ENCODE measurements at regions of chr13 and their contacts with region 1.

Region 1: DNA sequence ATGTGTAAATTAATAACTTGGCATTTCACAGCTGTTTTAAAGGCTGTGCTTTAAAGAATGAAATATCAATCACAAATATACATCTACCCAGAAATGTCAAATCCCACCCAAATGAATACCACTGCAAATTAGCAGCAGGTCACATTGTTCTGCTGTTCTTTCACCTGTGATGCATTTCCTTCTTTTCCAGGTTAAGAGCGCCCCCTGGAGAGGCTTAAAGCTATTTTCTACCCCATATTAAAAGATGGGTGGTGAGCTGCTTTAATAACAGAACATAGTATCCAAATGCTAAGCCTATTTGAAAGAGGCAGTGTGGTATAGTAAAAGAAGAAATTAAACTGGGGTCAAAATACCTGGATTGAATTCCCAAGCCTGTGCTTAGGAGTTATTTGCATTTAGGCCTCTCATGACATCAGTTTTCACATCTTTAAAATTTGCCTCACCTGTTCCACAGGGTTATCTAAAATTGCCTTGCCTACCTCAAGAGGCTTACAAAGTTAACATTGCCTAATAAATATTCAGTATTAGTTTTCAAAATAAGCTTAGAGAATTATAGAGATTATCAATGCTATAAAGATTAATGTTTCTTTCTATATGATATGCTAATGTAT is 396.9 kb upstream of the SLITRK5 start:
- DNase-seq: peak; percentile 10
- H3K4me3 ChIP-seq: no peak overlapping the region
- H3K27ac ChIP-seq: no peak overlapping the region
- H3K27me3 ChIP-seq: no peaks in the 10 kb centered on the region
- CTCF ChIP-seq: peak; percentile 76

Region 2: DNA sequence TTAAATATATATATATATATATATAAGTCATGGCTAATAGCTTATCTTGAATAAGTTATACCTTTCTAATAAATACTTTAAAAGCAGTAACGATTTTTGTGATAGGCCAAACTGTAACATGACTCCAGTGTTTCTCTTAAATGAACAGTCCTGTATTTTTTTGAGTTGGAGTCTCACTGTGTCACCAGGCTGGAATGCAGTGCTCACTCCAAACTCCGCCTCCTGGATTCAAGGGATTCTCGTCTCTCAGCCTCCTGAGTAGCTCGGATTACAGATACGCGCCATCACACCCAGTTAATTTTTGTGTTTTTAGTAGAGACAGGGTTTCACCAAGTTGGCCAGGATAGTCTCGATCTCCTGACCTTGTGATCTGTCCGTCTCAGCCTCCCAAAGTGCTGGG is 417.3 kb before region 1 on chr13:
- CTCF ChIA-PET with region 1: interaction called, 25 read pairs
- POLR2A ChIA-PET with region 1: no interaction called
- DNase-seq: peak; percentile 13
- H3K4me3 ChIP-seq: no peak overlapping the region
- H3K27ac ChIP-seq: no peak overlapping the region
- H3K27me3 ChIP-seq: no peaks in the 10 kb centered on the region
- CTCF ChIP-seq: no peak

Region 3: DNA sequence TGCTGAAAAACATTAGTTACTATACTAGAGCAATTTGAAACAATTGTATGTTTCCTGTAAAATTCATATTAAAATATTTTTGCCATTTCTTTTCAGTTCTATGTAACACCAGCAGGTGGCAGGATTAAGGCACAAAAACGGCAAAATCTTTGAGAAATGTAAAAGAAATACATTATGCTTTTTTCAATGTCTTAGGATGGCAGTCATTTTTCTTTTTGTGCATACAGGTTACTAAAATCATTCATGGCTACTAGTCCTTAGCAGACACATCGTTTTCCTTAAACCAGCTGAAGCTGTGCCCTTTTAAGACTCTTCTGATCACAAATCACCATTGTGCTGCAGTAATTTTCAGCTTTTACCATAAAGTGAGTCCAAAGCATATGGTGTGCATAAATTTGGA is 403.9 kb before region 1 on chr13:
- CTCF ChIA-PET with region 1: interaction called, 256 read pairs
- POLR2A ChIA-PET with region 1: no interaction called
- DNase-seq: no peak
- H3K4me3 ChIP-seq: no peak overlapping the region
- H3K27ac ChIP-seq: no peak overlapping the region
- H3K27me3 ChIP-seq: no peaks in the 10 kb centered on the region
- CTCF ChIP-seq: peak; percentile 66

Region 4: DNA sequence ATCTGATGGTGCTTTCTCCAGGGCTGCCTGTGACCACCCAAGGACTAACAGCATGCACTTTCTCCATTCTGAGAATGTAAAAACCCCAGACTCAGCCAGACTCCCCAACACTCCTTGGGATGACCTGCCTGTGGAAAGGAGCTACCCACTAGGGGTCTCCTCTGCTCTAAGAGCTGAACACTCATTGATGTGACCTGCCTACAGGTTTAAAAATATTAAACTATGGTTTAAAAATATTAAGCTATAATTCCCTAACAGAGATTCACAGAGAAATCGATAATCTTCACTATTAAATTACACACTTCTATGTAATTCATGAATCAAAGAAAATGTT is 299.4 kb before region 1 on chr13:
- CTCF ChIA-PET with region 1: interaction called, 33 read pairs
- POLR2A ChIA-PET with region 1: no interaction called
- DNase-seq: no peak
- H3K4me3 ChIP-seq: no peak overlapping the region
- H3K27ac ChIP-seq: no peak overlapping the region
- H3K27me3 ChIP-seq: no peaks in the 10 kb centered on the region
- CTCF ChIP-seq: peak; percentile 32

Region 5: GRCh38 chr13:87287721-87288120 is 13.4 kb after region 1 on chr13:
- CTCF ChIA-PET with region 1: interaction called, 21 read pairs
- POLR2A ChIA-PET with region 1: no interaction called
- DNase-seq: no peak
- H3K4me3 ChIP-seq: no peak overlapping the region
- H3K27ac ChIP-seq: no peak overlapping the region
- H3K27me3 ChIP-seq: no peaks in the 10 kb centered on the region
- CTCF ChIP-seq: no peak